ENCODE measurements at regions of chr7 and their contacts with region 1.

Region 1: DNA sequence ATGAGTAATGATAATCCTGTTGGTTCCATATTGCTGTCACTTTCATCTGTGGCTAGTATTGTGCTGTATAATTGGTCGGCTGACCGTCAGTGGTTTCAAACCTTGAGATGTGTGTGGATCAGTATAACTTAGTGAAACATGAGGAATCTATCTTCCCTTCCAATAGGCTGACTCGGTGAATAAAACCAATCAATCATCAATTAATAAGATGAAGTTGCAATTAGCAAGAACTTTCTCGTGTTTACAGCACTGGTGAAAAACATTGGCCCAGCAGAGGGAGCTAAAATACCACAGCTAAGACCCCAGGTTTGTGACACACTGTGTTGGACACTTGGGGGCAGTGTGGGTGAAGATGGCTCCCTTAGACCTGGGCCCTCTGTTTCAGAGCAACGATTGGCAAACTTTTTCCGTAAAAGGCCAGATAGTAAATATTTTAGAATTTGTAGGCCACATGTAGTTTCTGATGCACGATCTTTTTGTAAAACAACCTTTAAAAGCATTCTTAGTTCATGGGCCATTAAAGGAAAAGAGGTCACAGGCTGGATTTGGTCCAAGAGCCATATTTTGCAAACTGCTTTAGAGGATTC is 47.8 kb downstream of the STRA8 start:
- DNase-seq: peak; percentile 61
- H3K4me3 ChIP-seq: peak overlapping the region; percentile 36
- H3K27ac ChIP-seq: no peak overlapping the region
- H3K4me1 ChIP-seq: peaks cover 5% of the 10 kb centered on the region
- H3K27me3 ChIP-seq: peaks cover 16% of the 10 kb centered on the region
- CTCF ChIP-seq: peak; percentile 96

Region 2: GRCh38 chr7:135645296-135645904 is 363.9 kb after region 1 on chr7:
- intact Hi-C with region 1: loop called (anchors 10 kb)
- DNase-seq: no peak
- H3K4me3 ChIP-seq: no peak overlapping the region
- H3K27ac ChIP-seq: no peak overlapping the region
- H3K4me1 ChIP-seq: no peaks in the 10 kb centered on the region
- H3K27me3 ChIP-seq: no peaks in the 10 kb centered on the region
- CTCF ChIP-seq: peak; percentile 81

Measured in left ventricle myocardium inferior (tissue), 1 donor.